Caco-2 (cell line): ENCODE measurements at regions of chr11 and their contacts with region 1.

Region 1: GRCh38 chr11:60363542-60364510 is 14.5 kb upstream of the MS4A7 start:
- DNase-seq: peak; percentile 55 to 74
- H3K4me3 ChIP-seq: no peak overlapping the region
- H3K4me3 Mint-ChIP-seq: no peak overlapping the region
- H3K27ac Mint-ChIP-seq: no peak overlapping the region
- H3K4me1 ChIP-seq: no peaks in the 10 kb centered on the region; the same call in 1 of the 2 replicates
- H3K4me1 Mint-ChIP-seq: no peaks in the 10 kb centered on the region
- H3K27me3 ChIP-seq: no peaks in the 10 kb centered on the region
- H3K27me3 Mint-ChIP-seq: no peaks in the 10 kb centered on the region
- CTCF ChIP-seq: peak; percentile 70 to 83

Region 2: DNA sequence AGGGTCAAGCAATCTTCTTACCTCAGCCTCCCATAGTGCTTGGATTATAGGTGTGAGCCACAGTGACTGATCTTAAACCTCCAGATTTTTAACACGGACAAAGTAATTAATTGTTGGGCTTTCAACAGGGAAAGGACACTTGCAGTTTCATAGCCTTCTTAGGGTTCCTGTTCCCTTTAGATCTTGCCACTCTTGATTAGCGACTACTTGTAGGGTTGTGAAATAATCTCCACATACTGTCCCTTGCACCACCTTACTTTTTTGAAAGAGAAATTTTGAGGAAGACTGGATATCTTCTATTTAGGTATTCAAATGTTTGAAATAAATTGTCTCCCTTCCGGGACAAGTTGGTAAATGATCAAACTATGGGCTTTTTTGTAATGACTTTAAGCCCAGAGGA is 128.5 kb before region 1 on chr11:
- CTCF ChIA-PET with region 1: interaction called, 11 read pairs
- POLR2A ChIA-PET with region 1: no interaction called
- intact Hi-C with region 1: no loop called
- DNase-seq: no peak
- H3K4me3 ChIP-seq: no peak overlapping the region
- H3K4me3 Mint-ChIP-seq: no peak overlapping the region
- H3K27ac Mint-ChIP-seq: no peak overlapping the region
- H3K4me1 ChIP-seq: no peaks in the 10 kb centered on the region
- H3K4me1 Mint-ChIP-seq: no peaks in the 10 kb centered on the region
- H3K27me3 ChIP-seq: no peaks in the 10 kb centered on the region
- H3K27me3 Mint-ChIP-seq: peaks cover 13% of the 10 kb centered on the region
- CTCF ChIP-seq: no peak

Region 3: GRCh38 chr11:60389279-60389910 is 25.6 kb after region 1 on chr11:
- CTCF ChIA-PET with region 1: no interaction called
- POLR2A ChIA-PET with region 1: no interaction called
- intact Hi-C with region 1: no loop called
- DNase-seq: no peak
- H3K4me3 ChIP-seq: no peak overlapping the region
- H3K4me3 Mint-ChIP-seq: no peak overlapping the region
- H3K27ac Mint-ChIP-seq: no peak overlapping the region
- H3K4me1 ChIP-seq: no peaks in the 10 kb centered on the region
- H3K4me1 Mint-ChIP-seq: no peaks in the 10 kb centered on the region
- H3K27me3 ChIP-seq: no peaks in the 10 kb centered on the region
- H3K27me3 Mint-ChIP-seq: no peaks in the 10 kb centered on the region
- CTCF ChIP-seq: no peak

Region 4: GRCh38 chr11:60469723-60470122 is 105.9 kb after region 1 on chr11:
- CTCF ChIA-PET with region 1: no interaction called
- POLR2A ChIA-PET with region 1: no interaction called
- intact Hi-C with region 1: loop called (anchors 1 kb)
- DNase-seq: no peak
- H3K4me3 ChIP-seq: no peak overlapping the region
- H3K4me3 Mint-ChIP-seq: no peak overlapping the region
- H3K27ac Mint-ChIP-seq: no peak overlapping the region
- H3K4me1 ChIP-seq: no peaks in the 10 kb centered on the region
- H3K4me1 Mint-ChIP-seq: no peaks in the 10 kb centered on the region
- H3K27me3 ChIP-seq: no peaks in the 10 kb centered on the region
- H3K27me3 Mint-ChIP-seq: peaks cover 6% of the 10 kb centered on the region
- CTCF ChIP-seq: peak; percentile 13 to 39

Region 5: DNA sequence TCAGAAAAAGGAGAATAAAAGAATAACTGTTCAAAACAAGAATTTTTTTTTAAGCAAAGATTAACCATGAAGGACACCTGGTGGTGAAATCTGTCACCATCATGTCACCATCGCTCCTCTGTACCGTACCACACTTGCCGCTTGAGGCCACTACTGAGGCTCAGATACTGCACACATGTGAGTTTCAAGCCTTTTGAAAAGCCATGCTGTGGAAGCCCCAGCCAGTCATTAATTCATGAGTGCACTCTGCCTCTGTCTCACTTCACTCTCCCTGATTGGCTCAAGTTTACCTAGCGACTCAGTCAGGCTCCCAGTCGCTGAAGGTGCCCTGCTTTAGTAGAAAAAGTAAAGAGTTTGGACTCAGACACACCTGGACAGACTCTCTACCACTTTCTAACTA is 122.2 kb after region 1 on chr11:
- CTCF ChIA-PET with region 1: no interaction called
- POLR2A ChIA-PET with region 1: no interaction called
- intact Hi-C with region 1: loop called (anchors 1 kb)
- DNase-seq: peak; percentile 70 to 72
- H3K4me3 ChIP-seq: no peak overlapping the region
- H3K4me3 Mint-ChIP-seq: no peak overlapping the region
- H3K27ac Mint-ChIP-seq: no peak overlapping the region
- H3K4me1 ChIP-seq: no peaks in the 10 kb centered on the region
- H3K4me1 Mint-ChIP-seq: no peaks in the 10 kb centered on the region
- H3K27me3 ChIP-seq: no peaks in the 10 kb centered on the region
- H3K27me3 Mint-ChIP-seq: peaks cover 3% of the 10 kb centered on the region
- CTCF ChIP-seq: peak; percentile 83 to 93

Region 6: DNA sequence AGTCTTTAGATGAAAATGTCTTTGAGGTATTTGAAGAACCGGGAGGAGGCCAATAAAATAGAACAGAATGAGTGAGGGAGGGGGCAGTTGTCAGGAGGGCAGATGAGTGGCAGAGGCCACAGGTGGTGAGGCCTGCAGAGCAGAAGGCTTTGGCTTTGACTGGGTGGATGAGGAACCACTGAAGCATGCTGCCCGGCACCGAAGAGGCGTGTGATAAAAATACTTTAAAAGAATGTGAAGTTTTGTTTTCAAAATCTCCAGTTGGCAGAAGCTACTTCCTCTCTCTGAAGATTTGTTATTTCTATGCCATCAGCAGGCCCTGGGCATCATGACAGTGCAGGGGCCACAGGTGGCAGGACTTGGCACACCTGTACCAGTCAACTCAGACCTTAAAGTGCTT is 135.0 kb after region 1 on chr11:
- CTCF ChIA-PET with region 1: no interaction called
- POLR2A ChIA-PET with region 1: no interaction called
- intact Hi-C with region 1: no loop called
- DNase-seq: no peak
- H3K4me3 ChIP-seq: no peak overlapping the region
- H3K4me3 Mint-ChIP-seq: no peak overlapping the region
- H3K27ac Mint-ChIP-seq: no peak overlapping the region
- H3K4me1 ChIP-seq: no peaks in the 10 kb centered on the region
- H3K4me1 Mint-ChIP-seq: no peaks in the 10 kb centered on the region
- H3K27me3 ChIP-seq: no peaks in the 10 kb centered on the region
- H3K27me3 Mint-ChIP-seq: peaks cover 3% of the 10 kb centered on the region
- CTCF ChIP-seq: no peak